PC-3 (cell line): ENCODE measurements at regions of chr17 and their contacts with region 1.

Region 1: GRCh38 chr17:1244606-1245012 is 25.6 kb upstream of the BHLHA9 start:
- DNase-seq: no peak
- ATAC-seq: no peak
- H3K4me3 ChIP-seq: no peak overlapping the region
- H3K27ac ChIP-seq: no peak overlapping the region
- H3K4me1 ChIP-seq: no peaks in the 10 kb centered on the region
- H3K27me3 ChIP-seq: no peaks in the 10 kb centered on the region
- CTCF ChIP-seq: no peak

Region 2: DNA sequence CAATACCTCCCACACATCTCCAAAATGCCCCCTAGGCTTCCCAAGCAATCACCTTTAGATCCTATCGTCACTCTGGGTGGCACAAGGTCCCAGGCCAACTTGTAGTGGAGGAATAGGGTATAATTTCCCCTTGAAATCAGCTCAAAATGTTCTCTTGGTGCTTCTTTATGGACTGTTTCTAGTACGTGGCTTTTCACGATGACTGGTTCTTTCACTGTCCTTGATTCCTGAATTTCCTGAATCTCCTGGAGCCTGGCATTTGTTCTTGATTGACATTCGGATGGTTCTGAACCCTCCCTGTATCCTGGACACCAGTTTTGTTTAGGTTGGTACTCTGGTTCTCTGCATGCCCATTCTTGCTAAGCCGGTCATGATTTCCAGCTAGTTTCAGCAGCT is 523.1 kb before region 1 on chr17:
- CTCF ChIA-PET with region 1: no interaction called
- POLR2A ChIA-PET with region 1: interaction called, 25 read pairs
- intact Hi-C with region 1: no loop called
- DNase-seq: no peak
- ATAC-seq: no peak
- H3K4me3 ChIP-seq: no peak overlapping the region
- H3K27ac ChIP-seq: no peak overlapping the region
- H3K4me1 ChIP-seq: no peaks in the 10 kb centered on the region; the same call in 1 of the 2 replicates
- H3K27me3 ChIP-seq: no peaks in the 10 kb centered on the region
- CTCF ChIP-seq: no peak

Region 3: GRCh38 chr17:1179818-1180742 is 64.5 kb before region 1 on chr17 and contains the start of gene ABR:
- CTCF ChIA-PET with region 1: no interaction called
- POLR2A ChIA-PET with region 1: no interaction called
- intact Hi-C with region 1: no loop called
- DNase-seq: no peak
- ATAC-seq: peak; percentile 40
- H3K4me3 ChIP-seq: peak within 1 kb of the TSS; percentile 73
- H3K27ac ChIP-seq: no peak within 1 kb of the TSS
- H3K4me1 ChIP-seq: peaks cover 3% of the 10 kb centered on the region; the same call in 1 of the 2 replicates
- H3K27me3 ChIP-seq: no peaks in the 10 kb centered on the region
- CTCF ChIP-seq: no peak
- total RNA-seq, gene ABR: 35.4 and 58.5 TPM in 2 replicates

Region 4: DNA sequence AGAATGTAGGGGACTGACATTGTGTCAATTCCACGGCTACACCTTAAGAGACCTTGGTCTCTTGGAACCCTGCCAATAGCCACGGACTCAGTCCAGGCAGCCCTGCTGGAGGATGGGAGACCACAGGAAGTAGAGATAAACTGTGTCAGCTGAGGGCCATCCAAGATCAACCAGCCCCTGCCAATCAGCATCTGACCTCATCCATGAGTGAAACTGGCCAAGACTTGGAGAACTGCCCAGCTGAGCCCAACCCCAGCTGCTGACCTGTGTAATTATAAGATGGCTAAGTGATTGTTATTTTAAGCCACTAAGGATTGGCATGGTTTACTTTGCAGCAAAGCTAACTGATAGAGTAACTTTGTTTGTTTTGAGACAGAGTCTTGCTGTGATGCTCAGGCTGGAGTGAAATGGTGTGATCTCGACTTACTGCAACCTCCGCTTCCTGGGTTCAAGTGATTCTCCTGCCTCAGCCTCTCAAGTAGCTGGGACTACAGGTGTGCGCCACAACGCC is 168.7 kb after region 1 on chr17:
- CTCF ChIA-PET with region 1: no interaction called
- POLR2A ChIA-PET with region 1: no interaction called
- intact Hi-C with region 1: no loop called
- DNase-seq: peak; percentile 79
- ATAC-seq: peak; percentile 91
- H3K4me3 ChIP-seq: no peak overlapping the region
- H3K27ac ChIP-seq: 0 out of 2 replicates have a peak overlapping the region, but pooled peaks have one; percentile 40
- H3K4me1 ChIP-seq: 0 out of 2 replicates have a peak, but pooled peaks cover 10% of the 10 kb centered on the region
- H3K27me3 ChIP-seq: no peaks in the 10 kb centered on the region
- CTCF ChIP-seq: no peak